ENCODE measurements at regions of chr3 and their contacts with region 1.

Region 1: DNA sequence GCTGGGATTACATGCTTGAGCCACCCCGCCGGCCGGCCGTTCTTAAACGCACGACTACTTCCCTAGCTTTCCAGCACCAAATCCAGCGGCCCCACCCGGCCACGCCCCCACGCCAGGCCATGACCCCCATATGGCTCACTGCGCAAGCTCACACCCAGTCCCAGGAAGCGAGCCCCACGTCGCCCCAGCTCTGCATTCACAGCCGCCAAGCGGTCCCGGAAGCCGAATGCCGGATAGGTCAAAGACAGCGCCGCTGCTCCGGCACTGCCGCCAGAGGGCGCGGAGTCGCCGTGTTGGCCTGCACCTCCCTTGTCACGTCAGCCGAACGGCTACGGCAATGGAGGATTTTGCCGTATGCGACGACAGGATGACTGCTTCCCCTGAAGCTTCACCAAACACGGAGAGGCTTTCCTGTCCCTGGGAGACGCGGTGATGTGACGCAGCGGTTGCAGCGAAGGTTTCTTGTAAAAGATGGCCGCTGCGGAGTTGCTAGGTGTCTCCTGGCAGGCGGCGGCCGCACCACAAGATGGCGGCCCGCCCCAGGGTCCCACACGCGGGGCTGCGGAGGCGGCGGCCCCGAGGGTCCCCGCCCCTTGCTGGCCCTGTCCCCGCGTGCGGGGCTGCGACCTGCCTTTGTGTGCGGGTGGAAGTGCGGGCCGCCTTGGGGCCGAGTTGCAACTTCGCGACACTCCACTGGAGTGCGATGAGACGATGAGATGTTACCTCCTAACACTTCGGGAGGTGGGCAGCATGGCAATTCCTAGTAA is 30.2 kb upstream of the RPN1 start:
- DNase-seq: peak; percentile 99
- H3K4me3 ChIP-seq: peak overlapping the region; percentile 54 to 78 (median 62)
- H3K27ac ChIP-seq: peak overlapping the region; percentile 86 to 95 (median 92)
- H3K4me1 ChIP-seq: peaks cover 0 to 6% (median 3%) of the 10 kb centered on the region in 4 donors
- H3K27me3 ChIP-seq: no peaks in the 10 kb centered on the region
- CTCF ChIP-seq: peak; percentile 95 to 100 (median 99)
- EP300 ChIP-seq: peak in 1 of 4 donors; percentile 15
- POLR2A ChIP-seq: peak; percentile 79 to 89

Region 2: GRCh38 chr3:128617557-128618397 is 63.0 kb before region 1 on chr3:
- intact Hi-C with region 1: loop called (anchors 5 kb)
- DNase-seq: peak; percentile 99
- H3K4me3 ChIP-seq: peak overlapping the region; percentile 78 to 90 (median 84)
- H3K27ac ChIP-seq: peak overlapping the region; percentile 84 to 93 (median 90)
- H3K4me1 ChIP-seq: peaks cover 0 to 21% (median 18%) of the 10 kb centered on the region in 4 donors
- H3K27me3 ChIP-seq: no peaks in the 10 kb centered on the region
- CTCF ChIP-seq: peak; percentile 87 to 95 (median 92)
- EP300 ChIP-seq: peak in 1 of 4 donors; percentile 68
- POLR2A ChIP-seq: no peak

Region 3: GRCh38 chr3:128698211-128699064 is 17.7 kb after region 1 on chr3:
- intact Hi-C with region 1: loop called (anchors 1 kb)
- DNase-seq: peak; percentile 74
- H3K4me3 ChIP-seq: peak overlapping the region; percentile 48 to 70 (median 64)
- H3K27ac ChIP-seq: peak overlapping the region; percentile 83 to 89 (median 86)
- H3K4me1 ChIP-seq: peaks cover 0 to 4% (median 0%) of the 10 kb centered on the region in 4 donors
- H3K27me3 ChIP-seq: no peaks in the 10 kb centered on the region
- CTCF ChIP-seq: no peak
- EP300 ChIP-seq: no peak
- POLR2A ChIP-seq: peak in 1 of 2 donors; percentile 26

Region 4: GRCh38 chr3:128794770-128795649 is 114.2 kb after region 1 on chr3:
- intact Hi-C with region 1: loop called (anchors 1 kb)
- DNase-seq: peak; percentile 71
- H3K4me3 ChIP-seq: no peak overlapping the region
- H3K27ac ChIP-seq: peak overlapping the region; percentile 29 to 63 (median 50)
- H3K4me1 ChIP-seq: peaks cover 0 to 29% (median 23%) of the 10 kb centered on the region in 4 donors
- H3K27me3 ChIP-seq: no peaks in the 10 kb centered on the region
- CTCF ChIP-seq: peak; percentile 59 to 86 (median 81)
- EP300 ChIP-seq: no peak
- POLR2A ChIP-seq: no peak

Region 5: GRCh38 chr3:128879125-128879969 is 198.6 kb after region 1 on chr3 and contains the start of gene ACAD9:
- intact Hi-C with region 1: loop called (anchors 2 kb)
- DNase-seq: peak; percentile 99
- H3K4me3 ChIP-seq: peak within 1 kb of the TSS; percentile 62 to 81 (median 68)
- H3K27ac ChIP-seq: peak within 1 kb of the TSS; percentile 94 to 97 (median 96)
- H3K4me1 ChIP-seq: peaks cover 0 to 37% (median 29%) of the 10 kb centered on the region in 4 donors
- H3K27me3 ChIP-seq: no peaks in the 10 kb centered on the region
- CTCF ChIP-seq: no peak
- EP300 ChIP-seq: peak in 1 of 4 donors; percentile 86
- POLR2A ChIP-seq: peak; percentile 90 to 97
- total RNA-seq, gene ACAD9: 30.3 to 40.5 (median 34.4) TPM